ENCODE measurements at regions of chr4 and their contacts with region 1.

Region 1: GRCh38 chr4:15655229-15656037 is at the start of gene FBXL5:
- DNase-seq: peak; percentile 90
- ATAC-seq: peak; percentile 76
- H3K4me3 Mint-ChIP-seq: peak within 1 kb of the TSS; percentile 99
- H3K27ac Mint-ChIP-seq: peak within 1 kb of the TSS; percentile 97
- H3K4me1 Mint-ChIP-seq: peaks cover 57% of the 10 kb centered on the region
- H3K27me3 Mint-ChIP-seq: no peaks in the 10 kb centered on the region
- total RNA-seq, gene FBXL5: 20.1 to 29.1 TPM

Region 2: DNA sequence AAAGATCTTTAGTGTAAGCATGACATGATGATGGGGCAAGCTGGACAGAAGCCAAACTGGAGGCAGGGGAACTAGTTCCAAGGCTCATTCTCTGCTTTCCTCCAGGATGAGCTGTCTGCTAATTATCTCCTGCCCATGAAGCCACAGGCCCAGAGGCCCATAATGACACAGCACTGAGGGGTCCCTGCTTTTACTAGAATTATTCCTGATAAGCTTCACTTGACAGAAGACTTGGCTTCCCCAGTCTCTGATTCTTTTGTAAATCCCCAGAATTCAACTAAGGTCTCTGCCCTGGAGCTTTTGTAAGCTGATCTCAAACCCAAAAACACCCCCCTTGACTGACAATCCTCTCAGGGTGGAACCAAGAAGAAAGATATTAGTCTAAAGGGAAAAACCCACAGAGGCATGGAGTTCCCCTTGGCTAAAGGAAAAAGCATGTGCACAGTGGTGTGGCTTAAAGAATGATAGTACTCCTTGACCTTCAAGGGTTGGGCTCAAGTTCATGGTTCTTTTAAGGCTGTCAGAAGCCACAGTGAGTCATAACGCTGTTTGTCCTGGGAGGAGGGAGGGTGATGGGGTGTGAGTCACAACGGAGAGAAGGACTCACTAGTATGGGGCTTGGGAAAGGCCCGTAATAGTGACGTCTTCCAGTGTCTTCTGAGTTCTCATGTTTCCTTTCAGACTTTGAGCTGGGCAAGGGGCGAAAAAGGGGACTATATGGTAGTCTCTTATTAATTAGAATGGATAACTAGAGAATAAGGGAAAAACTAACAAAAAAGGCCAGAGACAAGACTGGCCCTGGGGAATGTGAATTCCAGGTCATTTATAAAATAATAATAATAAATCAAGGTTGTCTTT is 799.1 kb before region 1 on chr4:
- CTCF ChIA-PET with region 1: no interaction called
- POLR2A ChIA-PET with region 1: no interaction called
- intact Hi-C with region 1: loop called in 1 of 2 experiments (anchors 10 kb)
- DNase-seq: peak; percentile 86
- ATAC-seq: peak; percentile 94
- H3K4me3 Mint-ChIP-seq: peak overlapping the region; percentile 3
- H3K27ac Mint-ChIP-seq: peak overlapping the region; percentile 89
- H3K4me1 Mint-ChIP-seq: peaks cover 28% of the 10 kb centered on the region
- H3K27me3 Mint-ChIP-seq: peaks cover 19% of the 10 kb centered on the region

Region 3: DNA sequence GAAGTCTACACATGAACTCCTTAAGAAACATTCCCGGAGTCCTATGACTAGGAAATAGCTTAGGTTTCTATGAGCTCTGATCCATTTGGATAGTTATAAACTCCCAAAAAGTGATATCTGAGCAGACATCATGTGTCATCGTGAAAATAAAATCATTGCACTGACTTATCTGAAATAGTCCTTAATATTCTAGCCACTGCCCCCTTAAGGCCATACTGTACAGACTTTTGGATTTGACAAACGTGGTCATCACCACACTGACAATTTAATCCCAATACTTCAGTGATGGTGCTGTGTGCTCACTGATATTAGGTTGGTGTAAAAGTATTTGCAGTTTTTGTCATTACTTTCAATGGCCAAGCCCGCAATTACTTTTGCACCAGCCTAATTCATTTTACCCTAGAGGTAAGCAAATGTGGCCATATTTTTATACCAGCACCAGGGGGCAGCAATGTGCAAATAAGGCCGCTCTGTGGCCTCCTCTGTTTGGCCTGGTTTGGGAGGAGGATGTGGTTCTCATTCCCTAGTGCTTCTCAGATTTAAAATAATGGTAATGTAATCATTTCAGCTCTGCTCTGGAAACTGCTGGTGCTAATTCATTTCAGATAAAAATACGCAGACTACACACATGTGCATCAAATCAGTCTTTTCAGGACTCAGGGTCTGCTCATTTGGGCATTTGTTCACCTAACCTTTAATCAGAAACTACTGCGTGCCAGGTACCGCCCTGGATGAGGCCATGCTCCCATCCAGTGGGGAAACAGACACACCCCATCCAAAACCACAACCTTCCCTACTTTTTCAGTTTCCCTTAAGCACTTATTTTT is 424.0 kb before region 1 on chr4:
- CTCF ChIA-PET with region 1: interaction called, 5 read pairs
- POLR2A ChIA-PET with region 1: no interaction called
- intact Hi-C with region 1: loop called (anchors 2 kb)
- DNase-seq: peak; percentile 85
- ATAC-seq: peak; percentile 65
- H3K4me3 Mint-ChIP-seq: no peak overlapping the region
- H3K27ac Mint-ChIP-seq: no peak overlapping the region
- H3K4me1 Mint-ChIP-seq: peaks cover 31% of the 10 kb centered on the region
- H3K27me3 Mint-ChIP-seq: no peaks in the 10 kb centered on the region

Region 4: GRCh38 chr4:15681207-15682015 is 26.0 kb after region 1 on chr4 and contains the start of gene FAM200B:
- CTCF ChIA-PET with region 1: interaction called, 11 read pairs
- POLR2A ChIA-PET with region 1: interaction called, 5 read pairs
- intact Hi-C with region 1: loop called (anchors 1 kb)
- DNase-seq: peak; percentile 99
- ATAC-seq: peak; percentile 98
- H3K4me3 Mint-ChIP-seq: peak within 1 kb of the TSS; percentile 98
- H3K27ac Mint-ChIP-seq: peak within 1 kb of the TSS; percentile 96
- H3K4me1 Mint-ChIP-seq: peaks cover 39% of the 10 kb centered on the region
- H3K27me3 Mint-ChIP-seq: no peaks in the 10 kb centered on the region
- total RNA-seq, gene FAM200B: 9.8 to 13.3 TPM

Region 5: DNA sequence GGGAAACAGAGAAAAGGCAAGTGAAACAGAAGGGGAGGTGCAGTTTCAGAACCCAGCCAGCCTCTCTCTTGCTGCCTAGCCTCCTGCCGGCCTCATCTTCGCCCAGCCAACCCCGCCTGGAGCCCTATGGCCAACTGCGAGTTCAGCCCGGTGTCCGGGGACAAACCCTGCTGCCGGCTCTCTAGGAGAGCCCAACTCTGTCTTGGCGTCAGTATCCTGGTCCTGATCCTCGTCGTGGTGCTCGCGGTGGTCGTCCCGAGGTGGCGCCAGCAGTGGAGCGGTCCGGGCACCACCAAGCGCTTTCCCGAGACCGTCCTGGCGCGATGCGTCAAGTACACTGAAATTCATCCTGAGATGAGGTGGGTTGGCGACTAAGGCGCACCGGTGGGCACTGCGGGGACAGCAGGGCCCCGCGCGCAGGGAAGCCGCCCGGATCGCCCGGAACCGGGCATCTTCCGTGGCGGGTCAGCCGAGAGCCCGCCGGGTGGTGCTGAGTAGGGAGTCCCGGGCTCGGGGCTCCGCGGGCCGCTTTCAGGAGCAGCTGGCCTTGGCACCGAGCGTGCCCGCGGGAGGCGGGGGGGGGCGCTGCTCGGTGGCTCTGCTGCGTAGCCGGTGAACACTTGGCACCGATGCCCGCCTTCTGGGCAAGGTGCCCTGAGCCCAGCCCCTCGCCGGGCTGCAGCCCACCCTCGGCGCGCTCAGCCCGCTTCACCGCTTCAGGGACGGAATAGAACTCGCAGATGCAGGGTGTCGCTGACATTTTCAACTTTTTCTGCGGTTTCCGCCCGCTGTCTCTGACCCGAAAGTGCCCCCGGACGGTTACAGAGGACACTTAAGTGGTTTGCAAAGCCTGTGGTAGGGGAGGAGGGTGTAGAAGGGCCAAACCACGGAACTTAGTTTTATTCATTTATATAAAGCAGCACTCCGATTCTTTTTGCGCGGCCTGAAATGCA is 123.1 kb after region 1 on chr4 and contains the start of gene CD38:
- CTCF ChIA-PET with region 1: interaction called, 4 read pairs
- POLR2A ChIA-PET with region 1: no interaction called
- intact Hi-C with region 1: loop called in 1 of 2 experiments (anchors 2 kb)
- DNase-seq: peak; percentile 76
- ATAC-seq: peak; percentile 76
- H3K4me3 Mint-ChIP-seq: peak within 1 kb of the TSS; percentile 84
- H3K27ac Mint-ChIP-seq: peak within 1 kb of the TSS; percentile 86
- H3K4me1 Mint-ChIP-seq: peaks cover 70% of the 10 kb centered on the region
- H3K27me3 Mint-ChIP-seq: peaks cover 30% of the 10 kb centered on the region
- total RNA-seq, gene CD38: 15.0 to 17.3 TPM